ENCODE measurements at regions of chr3 and their contacts with region 1.

Region 1: GRCh38 chr3:42701142-42702065 is 1.2 kb downstream of the HHATL start:
- DNase-seq: peak; percentile 90

Region 2: DNA sequence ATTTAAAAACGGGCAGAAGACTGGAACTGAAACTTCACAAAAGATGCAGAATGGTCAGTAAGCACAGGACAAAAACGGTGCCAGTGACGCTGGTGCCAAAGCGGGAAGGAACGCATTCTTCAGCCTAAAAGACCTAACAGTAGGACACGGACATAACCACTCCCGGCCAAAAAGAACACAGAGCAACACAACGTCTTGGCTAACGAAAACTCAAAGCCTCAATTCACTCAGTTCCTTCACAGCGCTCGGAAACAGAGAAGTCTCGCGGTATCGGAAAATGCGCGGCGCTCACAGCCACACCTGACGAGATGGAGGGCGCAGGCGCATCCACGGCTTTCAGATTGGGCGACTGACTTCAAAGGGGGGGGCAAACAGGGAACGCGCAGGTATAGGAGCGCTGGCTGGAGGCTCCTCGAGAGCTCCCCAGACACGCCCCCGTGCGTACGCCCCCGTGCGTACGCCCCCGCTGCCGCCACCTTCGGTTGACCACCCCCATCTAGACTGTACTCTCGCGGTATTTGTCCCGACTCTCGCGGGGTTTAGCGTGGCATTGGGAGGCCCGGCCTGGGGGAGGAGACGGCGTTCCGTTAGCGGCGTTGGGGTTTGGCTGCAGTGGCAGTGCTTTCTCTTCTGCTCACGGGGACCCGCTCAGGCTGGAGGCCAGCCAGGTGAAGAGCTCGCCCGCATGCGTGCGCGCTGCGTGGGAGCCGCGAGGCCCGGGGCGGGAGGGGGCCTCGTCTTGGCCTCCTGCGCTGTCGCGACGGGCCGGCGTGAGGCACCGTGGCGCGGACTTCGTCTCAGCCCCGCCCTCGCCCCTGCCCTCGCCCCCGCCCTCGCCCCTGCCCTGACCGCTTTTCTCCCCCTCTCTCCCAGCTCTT is 101.1 kb before region 1 on chr3 and contains the start of gene NKTR:
- intact Hi-C with region 1: loop called (anchors 1 kb)
- DNase-seq: peak; percentile 98
- total RNA-seq, gene NKTR: 35.1 TPM

Region 3: GRCh38 chr3:42660893-42661292 is 40.5 kb before region 1 on chr3:
- intact Hi-C with region 1: loop called (anchors 2 kb)
- DNase-seq: no peak

Region 4: DNA sequence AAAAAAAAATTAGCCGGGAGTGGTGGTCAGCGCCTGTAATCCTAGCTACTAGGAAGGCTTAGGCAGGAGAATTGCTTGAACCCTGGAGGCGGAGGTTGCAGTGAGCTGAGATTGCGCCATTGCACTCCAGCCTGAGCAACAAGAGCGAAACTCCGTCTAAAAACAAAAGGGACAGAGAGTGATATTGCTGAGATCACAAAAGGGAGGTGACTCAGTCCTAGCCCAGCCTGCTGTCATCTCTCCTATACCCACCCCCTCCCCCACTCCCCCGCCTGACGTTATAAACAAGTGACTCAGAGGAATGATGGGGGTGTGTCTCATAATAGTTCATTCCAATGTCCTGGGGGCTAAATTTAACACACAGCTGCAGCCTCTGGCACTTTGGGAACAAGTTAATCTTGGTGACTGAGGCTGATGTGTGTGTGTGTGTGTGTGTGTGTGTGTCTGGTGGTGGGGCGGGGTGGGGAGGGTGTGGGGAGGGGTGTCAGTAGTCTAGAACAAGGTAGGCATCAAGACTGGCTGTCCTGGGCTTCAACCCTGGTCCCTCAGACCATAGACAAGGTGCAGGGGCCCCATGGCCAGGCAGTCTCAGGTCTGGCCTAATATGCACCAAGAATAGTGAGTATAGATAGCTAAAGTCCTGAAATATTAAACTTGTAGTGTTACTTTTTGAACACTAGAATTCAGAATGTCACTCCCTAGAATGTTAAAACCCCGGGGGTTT is 17.4 kb before region 1 on chr3:
- intact Hi-C with region 1: loop called (anchors 2 kb)
- DNase-seq: peak; percentile 81

Region 5: GRCh38 chr3:42739401-42740158 is 38.2 kb after region 1 on chr3:
- intact Hi-C with region 1: loop called (anchors 1 kb)
- DNase-seq: peak; percentile 92

Region 6: GRCh38 chr3:42749753-42750231 is 48.4 kb after region 1 on chr3:
- intact Hi-C with region 1: loop called (anchors 1 kb)
- DNase-seq: peak; percentile 75

Region 7: GRCh38 chr3:43296565-43296964 is 595.2 kb after region 1 on chr3:
- intact Hi-C with region 1: no loop called
- DNase-seq: no peak